ENCODE measurements at regions of chr20 and their contacts with region 1.

Region 1: GRCh38 chr20:561437-562231 is 18.0 kb upstream of the CSNK2A1 start:
- DNase-seq: peak; percentile 74
- H3K27ac ChIP-seq: no peak overlapping the region
- CTCF ChIP-seq: peak; percentile 98

Region 2: DNA sequence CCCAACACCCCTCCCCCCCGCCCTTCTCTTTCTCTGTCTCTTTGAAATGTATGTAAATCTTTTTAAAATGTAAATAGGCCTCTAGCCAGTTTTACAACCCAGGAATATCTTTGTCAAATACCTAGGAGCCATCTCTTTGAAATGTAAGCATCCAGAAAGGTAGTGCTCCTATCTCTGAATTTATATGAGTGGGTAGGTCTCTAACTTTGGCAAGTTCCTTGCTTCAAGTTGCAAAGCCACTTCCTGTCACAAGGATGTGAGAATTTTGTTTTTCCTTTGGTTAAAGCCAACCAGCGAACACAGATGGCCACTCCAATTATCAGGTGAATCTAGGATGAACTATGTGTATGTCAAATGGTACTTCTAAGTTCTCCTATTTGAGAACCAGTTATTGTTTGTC is 310.3 kb before region 1 on chr20:
- CTCF ChIA-PET with region 1: no interaction called
- POLR2A ChIA-PET with region 1: no interaction called
- DNase-seq: no peak
- H3K27ac ChIP-seq: no peak overlapping the region
- CTCF ChIP-seq: no peak

Region 3: GRCh38 chr20:324177-325044 is 237.2 kb before region 1 on chr20:
- CTCF ChIA-PET with region 1: no interaction called
- POLR2A ChIA-PET with region 1: no interaction called
- DNase-seq: peak; percentile 91
- H3K27ac ChIP-seq: peak overlapping the region; percentile 96
- CTCF ChIP-seq: no peak; the same call in 1 of the 2 replicates

Region 4: GRCh38 chr20:539848-540247 is 21.8 kb before region 1 on chr20:
- CTCF ChIA-PET with region 1: no interaction called
- POLR2A ChIA-PET with region 1: no interaction called
- DNase-seq: peak; percentile 61
- H3K27ac ChIP-seq: no peak overlapping the region
- CTCF ChIP-seq: no peak

Region 5: DNA sequence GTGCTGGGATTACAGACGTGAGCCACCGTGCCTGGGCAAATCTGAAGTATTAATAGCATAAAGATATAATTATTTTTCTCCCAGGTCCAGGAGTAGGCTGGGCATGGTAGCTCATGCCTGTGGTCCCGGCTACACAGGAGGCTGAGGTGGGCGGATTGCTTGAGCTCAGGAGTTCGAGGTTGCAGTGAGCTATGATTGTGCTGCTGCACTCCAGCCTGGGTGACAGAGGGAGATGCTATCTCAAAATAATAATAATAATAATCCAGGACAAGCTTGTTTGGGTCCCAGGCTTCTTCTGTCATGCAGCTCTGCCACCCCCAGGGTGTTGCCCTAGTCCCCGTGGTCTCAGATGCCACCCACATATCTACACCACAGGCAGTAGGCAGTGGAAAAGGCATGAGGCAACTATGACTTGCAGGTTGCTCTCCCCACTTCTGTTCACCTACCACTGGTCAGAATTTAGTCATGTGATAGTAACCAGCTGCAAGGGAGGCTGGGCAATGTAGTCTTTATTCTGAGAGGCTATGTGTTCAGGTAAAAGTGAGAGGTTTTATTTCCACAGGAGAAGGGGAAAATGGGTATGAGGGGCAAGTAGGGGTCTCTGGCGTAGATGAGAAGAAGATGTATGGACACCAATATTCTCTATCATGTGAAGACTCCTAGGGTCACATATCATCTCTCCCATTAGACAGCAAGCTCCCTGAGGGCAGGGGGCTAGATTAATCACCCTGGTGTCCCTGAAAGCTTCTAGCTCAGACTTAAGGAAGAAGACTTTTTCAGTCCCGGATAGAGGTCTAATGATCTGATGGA is 22.7 kb after region 1 on chr20:
- CTCF ChIA-PET with region 1: no interaction called
- POLR2A ChIA-PET with region 1: no interaction called
- DNase-seq: no peak
- H3K27ac ChIP-seq: no peak overlapping the region
- CTCF ChIP-seq: no peak

Region 6: DNA sequence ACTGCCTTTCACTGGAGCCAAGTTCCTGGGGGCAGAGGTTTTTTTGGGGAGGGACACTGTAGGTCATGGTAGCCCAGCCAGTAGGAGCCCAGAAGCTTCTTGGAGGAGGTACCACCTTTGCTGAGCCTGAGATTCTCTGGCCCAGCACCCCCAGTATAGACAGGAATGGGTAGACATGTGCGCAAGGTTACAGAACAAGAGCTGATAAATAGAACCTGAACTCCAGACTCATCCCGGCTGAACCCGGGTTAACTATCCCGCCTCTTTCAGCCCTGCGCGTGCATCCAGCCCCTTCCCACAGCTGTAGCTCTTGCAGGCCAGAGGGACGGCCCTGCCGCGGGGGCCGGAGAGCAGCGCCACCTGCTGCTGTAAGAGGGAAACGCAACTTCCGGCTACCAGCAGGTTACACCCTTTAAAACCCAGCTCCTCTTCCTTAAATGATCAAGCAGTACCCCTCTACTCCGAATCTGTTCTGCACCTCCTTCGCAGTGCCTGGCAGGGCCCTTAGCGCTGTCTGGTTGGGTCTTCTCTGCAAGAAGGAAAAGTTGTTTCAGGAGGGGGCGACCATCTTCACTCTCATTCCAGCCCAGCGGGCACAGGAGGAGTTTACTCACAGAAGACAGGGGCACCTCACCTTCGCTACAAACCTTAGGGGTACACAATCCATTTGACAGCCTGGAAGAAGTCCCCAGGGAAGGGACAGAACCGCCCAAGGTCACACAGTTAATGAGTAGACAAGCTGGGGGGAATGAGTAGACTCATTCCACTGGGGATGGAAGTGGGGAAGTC is 83.9 kb after region 1 on chr20:
- CTCF ChIA-PET with region 1: interaction called, 35 read pairs
- POLR2A ChIA-PET with region 1: no interaction called
- DNase-seq: peak; percentile 75
- H3K27ac ChIP-seq: peak overlapping the region; percentile 17
- CTCF ChIP-seq: peak; percentile 96